Naive thymus-derived CD4-positive, alpha-beta T cell (primary cell): ENCODE measurements at regions of chr14 and their contacts with region 1.

Region 1: GRCh38 chr14:22766456-22767322 is at the start of gene OXA1L:
- DNase-seq: peak; percentile 86 to 99 (median 96)
- ATAC-seq: peak; percentile 96
- H3K4me3 ChIP-seq: peak within 1 kb of the TSS; percentile 93
- H3K4me3 Mint-ChIP-seq: peak within 1 kb of the TSS; percentile 86 to 97 (median 90)
- H3K27ac ChIP-seq: peak within 1 kb of the TSS; percentile 86
- H3K27ac Mint-ChIP-seq: peak within 1 kb of the TSS; percentile 88 to 99 (median 97)
- H3K4me1 ChIP-seq: peaks cover 18 to 24% of the 10 kb centered on the region in 2 donors
- H3K4me1 Mint-ChIP-seq: peaks cover 21 to 43% (median 39%) of the 10 kb centered on the region in 7 donors
- H3K27me3 ChIP-seq: no peaks in the 10 kb centered on the region
- H3K27me3 Mint-ChIP-seq: no peaks in the 10 kb centered on the region
- total RNA-seq, gene OXA1L: 112 to 177 (median 144) TPM

Region 2: GRCh38 chr14:22737052-22737451 is 29.6 kb before region 1 on chr14:
- CTCF ChIA-PET with region 1: no interaction called
- POLR2A ChIA-PET with region 1: no interaction called
- intact Hi-C with region 1: loop called in 1 of 2 experiments (anchors 2 kb)
- DNase-seq: peak in 1 of 9 donors; percentile 29
- ATAC-seq: no peak
- H3K4me3 ChIP-seq: no peak overlapping the region
- H3K4me3 Mint-ChIP-seq: peak overlapping the region in 1 of 10 donors; percentile 60
- H3K27ac ChIP-seq: no peak overlapping the region
- H3K27ac Mint-ChIP-seq: peak overlapping the region in 1 of 9 donors; percentile 94
- H3K4me1 ChIP-seq: no peaks in the 10 kb centered on the region
- H3K4me1 Mint-ChIP-seq: peaks cover 0 to 28% (median 0%) of the 10 kb centered on the region in 7 donors
- H3K27me3 ChIP-seq: no peaks in the 10 kb centered on the region
- H3K27me3 Mint-ChIP-seq: peaks cover 0 to 8% (median 5%) of the 10 kb centered on the region in 5 donors

Region 3: GRCh38 chr14:22829661-22830442 is 63.2 kb after region 1 on chr14 and contains the start of gene MRPL52:
- CTCF ChIA-PET with region 1: interaction called, 3 read pairs
- POLR2A ChIA-PET with region 1: interaction called, 5 read pairs
- intact Hi-C with region 1: loop called (anchors 1 to 2 kb)
- DNase-seq: peak; percentile 71 to 90 (median 88)
- ATAC-seq: peak; percentile 97
- H3K4me3 ChIP-seq: peak within 1 kb of the TSS; percentile 99
- H3K4me3 Mint-ChIP-seq: peak within 1 kb of the TSS; percentile 74 to 94 (median 91)
- H3K27ac ChIP-seq: peak within 1 kb of the TSS; percentile 95
- H3K27ac Mint-ChIP-seq: peak within 1 kb of the TSS; percentile 91 to 99 (median 97)
- H3K4me1 ChIP-seq: peaks cover 11 to 21% of the 10 kb centered on the region in 2 donors
- H3K4me1 Mint-ChIP-seq: peaks cover 11 to 39% (median 32%) of the 10 kb centered on the region in 7 donors
- H3K27me3 ChIP-seq: no peaks in the 10 kb centered on the region
- H3K27me3 Mint-ChIP-seq: peaks cover 0 to 2% (median 0%) of the 10 kb centered on the region in 5 donors
- total RNA-seq, gene MRPL52: 32.9 to 118 (median 48.2) TPM

Region 4: GRCh38 chr14:22872033-22872832 is 105.5 kb after region 1 on chr14:
- CTCF ChIA-PET with region 1: no interaction called
- POLR2A ChIA-PET with region 1: interaction called, 9 read pairs
- intact Hi-C with region 1: loop called (anchors 1 to 5 kb)
- DNase-seq: peak; percentile 55 to 76 (median 69)
- ATAC-seq: peak; percentile 57
- H3K4me3 ChIP-seq: peak overlapping the region; percentile 72
- H3K4me3 Mint-ChIP-seq: peak overlapping the region; percentile 87 to 98 (median 95)
- H3K27ac ChIP-seq: peak overlapping the region; percentile 86
- H3K27ac Mint-ChIP-seq: peak overlapping the region; percentile 83 to 98 (median 94)
- H3K4me1 ChIP-seq: peaks cover 20 to 33% of the 10 kb centered on the region in 2 donors
- H3K4me1 Mint-ChIP-seq: peaks cover 26 to 49% (median 29%) of the 10 kb centered on the region in 7 donors
- H3K27me3 ChIP-seq: no peaks in the 10 kb centered on the region
- H3K27me3 Mint-ChIP-seq: no peaks in the 10 kb centered on the region

Region 5: GRCh38 chr14:22918804-22919600 is 152.3 kb after region 1 on chr14 and contains the start of gene RBM23:
- CTCF ChIA-PET with region 1: no interaction called
- POLR2A ChIA-PET with region 1: interaction called, 13 read pairs
- intact Hi-C with region 1: loop called (anchors 1 kb)
- DNase-seq: peak; percentile 98 to 100 (median 100)
- ATAC-seq: peak; percentile 92
- H3K4me3 ChIP-seq: peak within 1 kb of the TSS; percentile 96
- H3K4me3 Mint-ChIP-seq: peak within 1 kb of the TSS; percentile 93 to 100 (median 97)
- H3K27ac ChIP-seq: peak within 1 kb of the TSS; percentile 98
- H3K27ac Mint-ChIP-seq: peak within 1 kb of the TSS; percentile 100
- H3K4me1 ChIP-seq: peaks cover 0 to 19% of the 10 kb centered on the region in 2 donors
- H3K4me1 Mint-ChIP-seq: peaks cover 18 to 56% (median 49%) of the 10 kb centered on the region in 7 donors
- H3K27me3 ChIP-seq: no peaks in the 10 kb centered on the region
- H3K27me3 Mint-ChIP-seq: peaks cover 0 to 4% (median 0%) of the 10 kb centered on the region in 5 donors
- total RNA-seq, gene RBM23: 91.9 to 140 (median 99.1) TPM

Region 6: GRCh38 chr14:23034483-23035302 is 268.0 kb after region 1 on chr14 and contains the start of gene PSMB5:
- CTCF ChIA-PET with region 1: no interaction called
- POLR2A ChIA-PET with region 1: no interaction called
- intact Hi-C with region 1: loop called (anchors 1 kb)
- DNase-seq: peak; percentile 63 to 94 (median 91)
- ATAC-seq: peak; percentile 95
- H3K4me3 ChIP-seq: peak within 1 kb of the TSS; percentile 79
- H3K4me3 Mint-ChIP-seq: peak within 1 kb of the TSS; percentile 87 to 96 (median 92)
- H3K27ac ChIP-seq: peak within 1 kb of the TSS; percentile 83
- H3K27ac Mint-ChIP-seq: peak within 1 kb of the TSS; percentile 93 to 99 (median 96)
- H3K4me1 ChIP-seq: peaks cover 9 to 17% of the 10 kb centered on the region in 2 donors
- H3K4me1 Mint-ChIP-seq: peaks cover 22 to 43% (median 29%) of the 10 kb centered on the region in 7 donors
- H3K27me3 ChIP-seq: no peaks in the 10 kb centered on the region
- H3K27me3 Mint-ChIP-seq: no peaks in the 10 kb centered on the region
- total RNA-seq, gene PSMB5: 19.2 to 69.1 (median 32.8) TPM